Heart right ventricle (tissue), 16 donors: ENCODE measurements at regions of chr4 and their contacts with region 1.

Region 1: GRCh38 chr4:1809754-1810511 is 16.8 kb downstream of the FGFR3 start:
- DNase-seq: peak; percentile 59 to 69
- ATAC-seq: peak; percentile 63 to 88 (median 80)
- H3K4me3 ChIP-seq: no peak overlapping the region
- H3K27ac ChIP-seq: no peak overlapping the region
- H3K4me1 ChIP-seq: no peaks in the 10 kb centered on the region
- H3K27me3 ChIP-seq: no peaks in the 10 kb centered on the region
- CTCF ChIP-seq: peak; percentile 64 to 93 (median 79)

Region 2: GRCh38 chr4:1746265-1746691 is 63.7 kb before region 1 on chr4:
- intact Hi-C with region 1: loop called (anchors 1 to 5 kb)
- DNase-seq: peak; percentile 63 to 77
- ATAC-seq: peak; percentile 60 to 83 (median 68)
- H3K4me3 ChIP-seq: no peak overlapping the region
- H3K27ac ChIP-seq: no peak overlapping the region
- H3K4me1 ChIP-seq: peaks cover 0 to 7% (median 4%) of the 10 kb centered on the region in 9 donors
- H3K27me3 ChIP-seq: peaks cover 0 to 11% (median 7%) of the 10 kb centered on the region in 7 donors
- CTCF ChIP-seq: peak; percentile 69 to 86 (median 79)

Region 3: GRCh38 chr4:1752284-1753041 is 57.5 kb before region 1 on chr4:
- intact Hi-C with region 1: loop called (anchors 1 to 5 kb)
- DNase-seq: no peak
- ATAC-seq: peak in 4 of 8 donors; percentile 9 to 24 (median 18)
- H3K4me3 ChIP-seq: peak overlapping the region in 2 of 10 donors; percentile 8 to 20
- H3K27ac ChIP-seq: peak overlapping the region in 2 of 10 donors; percentile 10 to 44
- H3K4me1 ChIP-seq: peaks cover 0 to 23% (median 14%) of the 10 kb centered on the region in 9 donors
- H3K27me3 ChIP-seq: peaks cover 0 to 11% (median 7%) of the 10 kb centered on the region in 7 donors
- CTCF ChIP-seq: no peak

Region 4: DNA sequence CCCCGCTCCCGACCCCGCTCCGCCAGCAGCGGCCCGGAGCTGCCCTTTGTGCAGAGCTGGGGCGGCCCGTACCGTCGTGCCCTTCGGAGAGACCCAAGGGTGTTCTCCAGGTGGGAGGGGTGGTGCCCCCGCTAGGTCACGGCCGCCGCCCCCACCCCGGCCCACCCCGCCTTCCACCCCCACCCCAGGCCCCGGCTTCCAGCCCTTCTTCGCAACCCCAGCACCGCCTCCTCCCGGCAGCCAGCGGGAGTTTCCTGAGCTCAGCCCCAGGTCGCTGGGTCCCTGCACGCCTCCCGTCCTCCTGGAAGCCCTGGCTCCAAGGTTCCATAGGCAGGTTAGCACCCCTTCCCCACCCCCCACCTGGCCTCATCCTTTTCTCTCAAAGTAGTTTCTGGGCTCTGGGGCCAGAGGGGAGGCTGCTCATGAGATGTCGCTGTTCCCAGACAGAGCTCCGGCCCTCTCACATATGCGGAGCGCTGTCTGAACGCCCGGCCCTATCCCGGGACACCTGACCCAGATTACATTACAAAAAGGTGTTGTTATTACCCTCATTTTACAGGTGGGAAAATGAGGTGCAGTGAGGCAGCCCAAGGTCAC is 42.1 kb before region 1 on chr4:
- intact Hi-C with region 1: loop called in 1 of 10 experiments (anchors 5 kb)
- DNase-seq: no peak
- ATAC-seq: no peak
- H3K4me3 ChIP-seq: peak overlapping the region in 9 of 10 donors; percentile 22 to 58 (median 49)
- H3K27ac ChIP-seq: no peak overlapping the region
- H3K4me1 ChIP-seq: peaks cover 2 to 19% (median 11%) of the 10 kb centered on the region in 9 donors
- H3K27me3 ChIP-seq: peaks cover 0 to 72% (median 18%) of the 10 kb centered on the region in 7 donors
- CTCF ChIP-seq: peak in 5 of 9 donors; percentile 13 to 41 (median 19)